HEK293T (cell line): ENCODE measurements at regions of chr11 and their contacts with region 1.

Region 1: GRCh38 chr11:33893711-33894397 is 2.0 kb upstream of the LMO2 start:
- DNase-seq: no peak

Region 2: GRCh38 chr11:33877038-33877437 is 16.8 kb before region 1 on chr11:
- CTCF ChIA-PET with region 1: interaction called, 10 read pairs
- POLR2A ChIA-PET with region 1: no interaction called
- DNase-seq: no peak

Region 3: GRCh38 chr11:34274723-34275401 is 381.0 kb after region 1 on chr11:
- CTCF ChIA-PET with region 1: interaction called, 11 read pairs
- POLR2A ChIA-PET with region 1: no interaction called
- DNase-seq: no peak